Ascending aorta (tissue), 2 donors: ENCODE measurements at regions of chr6 and their contacts with region 1.

Region 1: GRCh38 chr6:12331956-12332749 is 42.0 kb downstream of the EDN1 start:
- DNase-seq: peak in 1 of 2 donors; percentile 71
- H3K4me3 ChIP-seq: no peak overlapping the region
- H3K27ac ChIP-seq: peak overlapping the region; percentile 69 to 80
- H3K4me1 ChIP-seq: peaks cover 0 to 18% of the 10 kb centered on the region in 2 donors
- H3K27me3 ChIP-seq: no peaks in the 10 kb centered on the region
- CTCF ChIP-seq: no peak

Region 2: GRCh38 chr6:12265791-12266190 is 66.4 kb before region 1 on chr6:
- intact Hi-C with region 1: no loop called
- DNase-seq: no peak
- H3K4me3 ChIP-seq: no peak overlapping the region
- H3K27ac ChIP-seq: no peak overlapping the region
- H3K4me1 ChIP-seq: no peaks in the 10 kb centered on the region
- H3K27me3 ChIP-seq: no peaks in the 10 kb centered on the region
- CTCF ChIP-seq: no peak

Region 3: DNA sequence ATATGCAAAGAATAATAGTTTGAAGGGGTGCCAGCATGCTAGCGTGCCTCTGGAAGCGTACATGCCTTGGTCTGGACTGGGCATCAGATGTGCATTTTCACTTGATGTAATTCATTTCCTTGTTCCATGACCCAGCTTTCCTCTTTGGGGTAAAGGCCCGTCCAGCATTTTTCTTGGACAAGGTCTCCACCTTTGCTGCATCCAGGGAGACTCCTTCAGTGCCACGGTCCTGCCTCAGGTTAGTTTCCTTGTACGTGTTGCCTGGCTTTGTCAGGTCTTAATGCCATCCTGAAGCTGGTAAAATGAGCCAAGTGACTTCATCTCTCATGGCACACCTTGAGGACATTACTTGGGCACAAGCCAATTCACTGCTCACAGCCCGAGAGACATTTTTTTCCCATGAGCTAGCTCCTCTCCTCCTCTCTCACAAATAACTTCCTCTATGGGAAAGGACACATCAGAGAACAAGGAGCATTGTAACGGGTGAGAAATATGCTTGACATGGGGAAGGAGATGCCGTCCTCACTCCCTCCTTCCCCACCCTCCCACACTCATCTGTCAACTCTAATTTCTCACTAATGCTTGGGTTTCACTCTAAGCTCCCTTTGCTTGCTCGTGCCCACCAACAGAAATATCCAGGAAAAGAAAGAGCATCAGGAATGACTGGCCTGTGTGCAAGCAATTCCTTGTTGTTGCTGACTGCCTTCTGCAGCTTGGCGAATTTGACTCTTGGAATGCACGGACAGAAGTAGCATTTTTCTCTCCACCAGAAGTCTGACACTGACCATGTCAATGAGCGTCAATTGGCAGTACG is 18.0 kb before region 1 on chr6:
- intact Hi-C with region 1: loop called (anchors 2 kb)
- DNase-seq: no peak
- H3K4me3 ChIP-seq: peak overlapping the region in 1 of 2 donors; percentile 38
- H3K27ac ChIP-seq: peak overlapping the region; percentile 71 to 74
- H3K4me1 ChIP-seq: peaks cover 0 to 5% of the 10 kb centered on the region in 2 donors
- H3K27me3 ChIP-seq: no peaks in the 10 kb centered on the region
- CTCF ChIP-seq: no peak